PC-9 (cell line): ENCODE measurements at regions of chr1 and their contacts with region 1.

Region 1: DNA sequence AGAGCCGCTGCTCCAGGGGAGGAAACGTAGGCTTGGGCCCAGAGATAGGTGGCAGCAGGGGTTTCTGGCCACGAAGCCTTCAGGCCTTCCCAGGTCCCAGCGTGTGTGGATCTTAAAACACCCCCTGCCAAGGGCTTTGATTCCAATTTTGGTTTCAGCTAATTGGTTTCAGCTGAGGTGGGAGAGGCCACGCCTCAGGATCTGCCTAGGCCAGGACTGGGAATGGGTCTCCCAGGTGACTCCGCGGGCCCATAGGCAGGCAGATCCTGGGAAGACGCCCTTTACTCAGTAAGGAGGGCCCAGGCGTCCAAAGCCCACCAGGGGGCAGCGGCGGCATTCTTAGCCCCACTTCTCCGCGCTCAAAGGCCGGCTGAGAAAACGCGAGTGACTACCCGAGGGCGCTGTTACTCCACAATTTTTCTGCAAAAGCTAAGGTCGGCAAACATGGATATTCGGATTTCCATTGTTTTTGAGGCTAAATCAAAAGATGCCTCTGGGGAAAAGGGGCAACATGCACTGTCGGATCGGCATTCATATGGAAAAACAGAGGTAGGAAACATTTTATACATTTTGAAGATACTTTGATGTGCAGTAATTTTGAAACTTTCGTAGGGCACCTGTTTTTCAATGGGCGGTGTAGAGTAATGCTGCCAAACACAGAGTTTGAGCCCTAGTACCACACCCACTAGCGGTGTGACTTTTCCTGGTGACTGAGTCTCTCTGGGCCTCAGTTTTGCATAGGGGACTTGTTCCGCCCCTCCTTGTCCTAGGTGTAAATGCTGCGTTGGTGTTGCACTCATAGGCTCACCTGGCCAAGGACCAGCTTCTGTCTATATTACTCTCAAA is 31.8 kb upstream of the BCL10 start:
- DNase-seq: peak; percentile 50 to 87
- H3K4me3 ChIP-seq: no peak overlapping the region
- H3K27ac ChIP-seq: no peak overlapping the region
- H3K4me1 ChIP-seq: peaks cover 3% of the 10 kb centered on the region
- H3K27me3 ChIP-seq: no peaks in the 10 kb centered on the region
- CTCF ChIP-seq: peak; percentile 81

Region 2: GRCh38 chr1:85188530-85188929 is 119.7 kb before region 1 on chr1:
- CTCF ChIA-PET with region 1: no interaction called
- POLR2A ChIA-PET with region 1: no interaction called
- intact Hi-C with region 1: no loop called
- DNase-seq: no peak
- H3K4me3 ChIP-seq: no peak overlapping the region
- H3K27ac ChIP-seq: no peak overlapping the region
- H3K4me1 ChIP-seq: no peaks in the 10 kb centered on the region
- H3K27me3 ChIP-seq: no peaks in the 10 kb centered on the region
- CTCF ChIP-seq: no peak

Region 3: GRCh38 chr1:85344256-85344694 is 36.1 kb after region 1 on chr1:
- CTCF ChIA-PET with region 1: interaction called, 4 read pairs
- POLR2A ChIA-PET with region 1: no interaction called
- intact Hi-C with region 1: loop called (anchors 2 kb)
- DNase-seq: peak; percentile 45 to 47
- H3K4me3 ChIP-seq: no peak overlapping the region
- H3K27ac ChIP-seq: peak overlapping the region; percentile 22; the same call in 1 of the 2 replicates
- H3K4me1 ChIP-seq: peaks cover 24% of the 10 kb centered on the region
- H3K27me3 ChIP-seq: no peaks in the 10 kb centered on the region
- CTCF ChIP-seq: peak; percentile 84

Region 4: DNA sequence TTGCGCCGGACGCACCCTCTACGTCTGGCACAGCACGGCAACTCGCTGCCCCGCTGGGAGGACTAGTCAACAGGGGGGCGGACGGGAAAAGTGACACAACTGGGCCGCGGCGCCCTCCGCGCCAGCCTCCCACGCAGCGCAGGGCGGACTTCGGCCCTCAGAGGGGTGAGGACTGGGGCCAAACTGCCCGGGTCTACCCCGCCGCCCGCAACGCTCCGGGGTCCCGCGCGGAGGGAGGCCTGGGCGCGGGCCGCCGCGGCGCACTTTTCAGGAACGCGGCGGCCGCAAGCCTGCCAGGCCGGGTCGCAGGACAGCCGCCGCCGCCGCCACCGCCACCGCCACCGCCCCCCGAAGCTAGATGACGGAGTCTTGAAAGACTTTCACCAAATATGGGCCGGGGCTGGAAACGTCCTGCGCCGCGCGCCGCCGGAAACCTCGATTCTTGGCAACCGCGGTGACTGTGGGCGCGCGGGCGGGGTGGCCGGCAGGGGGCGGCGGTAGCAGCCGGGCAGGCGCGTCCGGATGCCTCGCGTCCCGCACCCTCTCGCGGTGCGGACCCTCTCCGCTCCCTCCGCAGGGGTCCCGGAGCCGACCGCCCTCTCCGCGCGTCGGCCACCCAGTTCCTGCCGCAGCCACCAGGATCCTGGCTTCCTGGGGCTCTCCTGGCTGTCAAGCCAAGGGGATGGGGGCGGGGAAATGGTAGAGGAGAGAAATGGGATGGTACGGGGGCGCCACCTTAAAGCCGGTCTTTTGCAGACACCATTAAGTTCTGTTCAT is 268.6 kb after region 1 on chr1:
- CTCF ChIA-PET with region 1: interaction called, 3 read pairs
- POLR2A ChIA-PET with region 1: no interaction called
- intact Hi-C with region 1: loop called (anchors 1 kb)
- DNase-seq: peak; percentile 74 to 83
- H3K4me3 ChIP-seq: peak overlapping the region; percentile 74
- H3K27ac ChIP-seq: peak overlapping the region; percentile 47
- H3K4me1 ChIP-seq: peaks cover 50% of the 10 kb centered on the region
- H3K27me3 ChIP-seq: no peaks in the 10 kb centered on the region
- CTCF ChIP-seq: peak; percentile 79

Region 5: GRCh38 chr1:85707990-85708828 is 400.0 kb after region 1 on chr1 and contains the start of gene ZNHIT6:
- CTCF ChIA-PET with region 1: interaction called, 6 read pairs
- POLR2A ChIA-PET with region 1: no interaction called
- intact Hi-C with region 1: loop called (anchors 1 kb)
- DNase-seq: peak; percentile 91 to 98
- H3K4me3 ChIP-seq: peak within 1 kb of the TSS; percentile 79
- H3K27ac ChIP-seq: peak within 1 kb of the TSS; percentile 67
- H3K4me1 ChIP-seq: peaks cover 22% of the 10 kb centered on the region
- H3K27me3 ChIP-seq: no peaks in the 10 kb centered on the region
- CTCF ChIP-seq: peak; percentile 73
- total RNA-seq, gene ZNHIT6: 13.7 and 16.1 TPM in 2 replicates

Region 6: DNA sequence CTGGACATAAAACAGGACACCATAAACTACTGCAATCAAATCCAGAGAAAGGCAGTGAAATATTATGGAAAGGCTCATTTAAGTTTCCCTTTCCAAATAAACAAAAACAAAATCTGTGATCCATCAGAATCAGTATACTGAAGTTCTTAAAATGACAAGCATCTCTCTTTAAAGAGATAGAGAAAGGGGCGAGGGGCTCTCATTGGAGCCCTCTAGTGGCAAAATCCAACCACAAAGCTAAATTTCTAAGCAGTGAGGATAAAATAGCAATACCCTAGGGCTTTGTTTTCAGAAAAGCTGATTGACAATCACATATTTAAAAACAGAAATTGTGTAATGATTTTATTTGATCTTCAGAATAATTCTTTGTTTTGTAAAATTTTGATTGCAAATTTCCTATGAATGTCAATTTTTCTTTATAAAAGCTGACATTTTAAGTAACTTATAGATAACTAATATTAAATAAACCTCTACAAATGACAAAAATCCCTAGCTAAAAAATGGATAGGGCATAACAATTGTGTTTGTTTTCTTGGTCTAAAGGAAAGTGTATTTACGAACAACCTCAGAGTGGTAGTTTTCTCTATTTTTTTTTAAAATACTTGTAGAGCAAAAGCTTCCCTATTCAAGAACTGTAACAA is 710.2 kb after region 1 on chr1:
- CTCF ChIA-PET with region 1: no interaction called
- POLR2A ChIA-PET with region 1: no interaction called
- intact Hi-C with region 1: loop called (anchors 5 kb)
- DNase-seq: peak in 1 of 2 experiments; percentile 3
- H3K4me3 ChIP-seq: no peak overlapping the region
- H3K27ac ChIP-seq: no peak overlapping the region
- H3K4me1 ChIP-seq: no peaks in the 10 kb centered on the region
- H3K27me3 ChIP-seq: no peaks in the 10 kb centered on the region
- CTCF ChIP-seq: peak; percentile 85